H1 (cell line): ENCODE measurements at regions of chr4 and their contacts with region 1.

Region 1: GRCh38 chr4:114417214-114417613 is 181.4 kb upstream of the UGT8 start:
- DNase-seq: no peak
- H3K4me3 ChIP-seq: no peak overlapping the region
- H3K27ac ChIP-seq: no peak overlapping the region
- H3K4me1 ChIP-seq: no peaks in the 10 kb centered on the region
- H3K27me3 ChIP-seq: no peaks in the 10 kb centered on the region
- CTCF ChIP-seq: peak in 2 of 3 experiments; percentile 42 to 54; a peak in 2 of 4 replicates
- EP300 ChIP-seq: no peak
- POLR2A ChIP-seq: no peak
- RAD21 ChIP-seq: peak; percentile 93 to 94

Region 2: GRCh38 chr4:114386637-114387233 is 30.5 kb before region 1 on chr4:
- CTCF ChIA-PET with region 1: interaction called, 17 read pairs
- POLR2A ChIA-PET with region 1: no interaction called
- DNase-seq: no peak
- H3K4me3 ChIP-seq: no peak overlapping the region
- H3K27ac ChIP-seq: no peak overlapping the region
- H3K4me1 ChIP-seq: no peaks in the 10 kb centered on the region
- H3K27me3 ChIP-seq: no peaks in the 10 kb centered on the region
- CTCF ChIP-seq: peak in 2 of 3 experiments; percentile 51 to 56; a peak in 2 of 4 replicates
- EP300 ChIP-seq: no peak
- POLR2A ChIP-seq: no peak
- RAD21 ChIP-seq: peak; percentile 88 to 92

Region 3: GRCh38 chr4:114659386-114660008 is 242.3 kb after region 1 on chr4:
- CTCF ChIA-PET with region 1: interaction called, 22 read pairs
- POLR2A ChIA-PET with region 1: no interaction called
- DNase-seq: peak; percentile 25 to 54
- H3K4me3 ChIP-seq: no peak overlapping the region
- H3K27ac ChIP-seq: no peak overlapping the region
- H3K4me1 ChIP-seq: peaks cover 0 to 8% (median 1%) of the 10 kb centered on the region in 4 experiments; a peak in 2 of 7 replicates
- H3K27me3 ChIP-seq: no peaks in the 10 kb centered on the region
- CTCF ChIP-seq: peak; percentile 75 to 92 (median 82)
- EP300 ChIP-seq: no peak
- POLR2A ChIP-seq: no peak
- RAD21 ChIP-seq: peak; percentile 92 to 93

Region 4: GRCh38 chr4:114684462-114684861 is 267.2 kb after region 1 on chr4:
- CTCF ChIA-PET with region 1: interaction called, 17 read pairs
- POLR2A ChIA-PET with region 1: no interaction called
- DNase-seq: no peak
- H3K4me3 ChIP-seq: no peak overlapping the region
- H3K27ac ChIP-seq: no peak overlapping the region
- H3K4me1 ChIP-seq: no peaks in the 10 kb centered on the region
- H3K27me3 ChIP-seq: no peaks in the 10 kb centered on the region
- CTCF ChIP-seq: no peak
- EP300 ChIP-seq: no peak
- POLR2A ChIP-seq: no peak
- RAD21 ChIP-seq: no peak

Region 5: GRCh38 chr4:114694770-114695169 is 277.6 kb after region 1 on chr4:
- CTCF ChIA-PET with region 1: interaction called, 15 read pairs
- POLR2A ChIA-PET with region 1: no interaction called
- DNase-seq: no peak
- H3K4me3 ChIP-seq: no peak overlapping the region
- H3K27ac ChIP-seq: no peak overlapping the region
- H3K4me1 ChIP-seq: no peaks in the 10 kb centered on the region
- H3K27me3 ChIP-seq: peaks cover 0 to 1% (median 0%) of the 10 kb centered on the region in 4 experiments; a peak in 1 of 7 replicates
- CTCF ChIP-seq: peak in 2 of 3 experiments; percentile 34 to 43; a peak in 2 of 4 replicates
- EP300 ChIP-seq: no peak
- POLR2A ChIP-seq: no peak
- RAD21 ChIP-seq: peak; percentile 81 to 86